Endothelial cell of umbilical vein (primary cell): ENCODE measurements at regions of chr11 and their contacts with region 1.

Region 1: GRCh38 chr11:9613118-9613829 is 39.8 kb downstream of the WEE1 start:
- DNase-seq: peak; percentile 99
- H3K4me3 ChIP-seq: peak overlapping the region in 2 of 3 experiments; percentile 16 to 43
- H3K27ac ChIP-seq: peak overlapping the region; percentile 100
- H3K4me1 ChIP-seq: peaks cover 36% of the 10 kb centered on the region
- H3K27me3 ChIP-seq: no peaks in the 10 kb centered on the region
- CTCF ChIP-seq: peak; percentile 95 to 96
- POLR2A ChIP-seq: no peak

Region 2: GRCh38 chr11:9460322-9461067 is 152.8 kb before region 1 on chr11 and contains the start of gene ZNF143:
- CTCF ChIA-PET with region 1: no interaction called
- POLR2A ChIA-PET with region 1: interaction called, 3 read pairs
- dilution Hi-C with region 1: no loop called
- intact Hi-C with region 1: loop called (anchors 2 kb)
- DNase-seq: peak; percentile 100
- H3K4me3 ChIP-seq: peak within 1 kb of the TSS; percentile 92 to 97 (median 94)
- H3K27ac ChIP-seq: peak within 1 kb of the TSS; percentile 95
- H3K4me1 ChIP-seq: peaks cover 15% of the 10 kb centered on the region
- H3K27me3 ChIP-seq: no peaks in the 10 kb centered on the region
- CTCF ChIP-seq: no peak
- POLR2A ChIP-seq: peak; percentile 72
- total RNA-seq, gene ZNF143: 19.0 and 22.1 TPM in 2 replicates

Region 3: GRCh38 chr11:9573052-9573774 is 40.1 kb before region 1 on chr11 and contains the start of gene WEE1:
- CTCF ChIA-PET with region 1: interaction called, 11 read pairs
- POLR2A ChIA-PET with region 1: no interaction called
- dilution Hi-C with region 1: no loop called
- intact Hi-C with region 1: loop called (anchors 1 kb)
- DNase-seq: peak; percentile 99
- H3K4me3 ChIP-seq: peak within 1 kb of the TSS; percentile 56 to 97 (median 63)
- H3K27ac ChIP-seq: peak within 1 kb of the TSS; percentile 83
- H3K4me1 ChIP-seq: peaks cover 34% of the 10 kb centered on the region
- H3K27me3 ChIP-seq: no peaks in the 10 kb centered on the region
- CTCF ChIP-seq: no peak
- POLR2A ChIP-seq: peak; percentile 50
- total RNA-seq, gene WEE1: 42.8 and 47.0 TPM in 2 replicates

Region 4: DNA sequence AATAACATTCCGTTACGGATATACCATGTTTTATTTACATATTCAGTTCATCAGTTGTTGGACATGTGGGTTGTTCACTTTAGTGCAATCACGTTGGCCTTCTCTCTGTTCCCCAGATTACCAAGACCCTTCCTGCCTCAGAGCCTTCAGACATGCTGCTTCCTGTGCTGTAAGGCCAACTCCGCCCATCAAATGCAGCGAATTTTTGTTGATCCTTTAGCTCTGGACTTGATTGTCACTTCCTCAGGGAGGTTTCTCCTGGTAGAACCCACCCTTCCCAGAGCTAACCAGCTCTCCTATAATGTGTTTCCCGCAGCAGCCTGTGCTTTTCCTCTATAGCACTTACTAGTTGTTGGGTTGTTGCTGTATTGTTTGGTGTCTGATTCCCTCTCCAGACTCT is 90.0 kb after region 1 on chr11:
- CTCF ChIA-PET with region 1: interaction called, 4 read pairs
- POLR2A ChIA-PET with region 1: no interaction called
- dilution Hi-C with region 1: no loop called
- intact Hi-C with region 1: loop called (anchors 1 kb)
- DNase-seq: peak; percentile 92
- H3K4me3 ChIP-seq: peak overlapping the region in 1 of 3 experiments; percentile 20
- H3K27ac ChIP-seq: peak overlapping the region; percentile 76
- H3K4me1 ChIP-seq: peaks cover 65% of the 10 kb centered on the region
- H3K27me3 ChIP-seq: no peaks in the 10 kb centered on the region
- CTCF ChIP-seq: no peak
- POLR2A ChIP-seq: no peak

Region 5: GRCh38 chr11:9748361-9748970 is 135.2 kb after region 1 on chr11:
- CTCF ChIA-PET with region 1: interaction called, 65 read pairs
- POLR2A ChIA-PET with region 1: no interaction called
- dilution Hi-C with region 1: loop called (anchors 25 kb)
- intact Hi-C with region 1: loop called (anchors 1 kb)
- DNase-seq: peak; percentile 81
- H3K4me3 ChIP-seq: no peak overlapping the region
- H3K27ac ChIP-seq: no peak overlapping the region
- H3K4me1 ChIP-seq: peaks cover 16% of the 10 kb centered on the region
- H3K27me3 ChIP-seq: no peaks in the 10 kb centered on the region
- CTCF ChIP-seq: peak; percentile 60 to 66
- POLR2A ChIP-seq: peak; percentile 1

Region 6: DNA sequence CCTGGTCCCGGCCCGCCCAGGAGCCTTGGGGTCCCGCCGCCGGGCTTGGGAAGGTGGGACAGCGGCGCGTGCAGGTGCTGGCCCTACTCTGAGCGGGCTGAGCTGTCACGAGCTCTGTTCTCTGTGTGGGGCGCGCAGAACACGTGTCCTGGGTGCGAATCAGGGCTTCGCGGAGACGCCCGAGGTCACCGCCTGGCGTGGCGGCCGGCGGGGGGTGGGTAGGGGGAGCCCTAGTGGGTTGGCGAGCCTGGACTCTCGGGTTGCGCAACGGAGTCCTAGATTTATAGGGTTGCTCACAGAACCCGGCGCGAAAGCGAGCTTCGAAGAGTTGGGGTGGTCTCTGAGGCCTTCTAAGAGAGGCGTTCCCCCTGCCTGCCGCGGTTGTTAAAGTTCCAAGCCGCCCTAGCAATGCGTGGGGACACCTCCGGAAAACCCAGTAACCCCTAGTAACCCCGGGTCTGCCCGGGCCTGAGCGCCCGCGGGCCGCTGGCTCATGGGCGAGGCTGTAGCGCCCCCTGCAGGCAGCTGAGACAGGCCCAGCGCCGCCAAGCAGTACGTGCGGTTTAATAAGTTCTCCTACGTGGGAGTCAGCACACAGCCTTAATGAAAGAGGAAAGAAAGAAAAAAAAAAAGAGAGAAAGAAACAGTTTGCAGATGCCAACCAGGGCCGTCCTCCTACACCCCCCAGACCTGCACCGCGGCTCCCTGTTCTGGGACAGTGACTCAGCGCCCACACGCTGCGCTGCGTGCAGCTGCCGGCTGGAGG is 694.4 kb after region 1 on chr11:
- CTCF ChIA-PET with region 1: interaction called, 4 read pairs
- POLR2A ChIA-PET with region 1: no interaction called
- dilution Hi-C with region 1: no loop called
- intact Hi-C with region 1: loop called (anchors 5 kb)
- DNase-seq: peak; percentile 96
- H3K4me3 ChIP-seq: peak overlapping the region; percentile 91 to 95 (median 93)
- H3K27ac ChIP-seq: peak overlapping the region; percentile 80
- H3K4me1 ChIP-seq: peaks cover 42% of the 10 kb centered on the region
- H3K27me3 ChIP-seq: no peaks in the 10 kb centered on the region
- CTCF ChIP-seq: peak; percentile 87 to 99
- POLR2A ChIP-seq: peak; percentile 90